Activated CD8-positive, alpha-beta T cell treated with anti-CD3 and anti-CD28 coated beads for 36 hours (primary cell): ENCODE measurements at regions of chr14 and their contacts with region 1.

Region 1: DNA sequence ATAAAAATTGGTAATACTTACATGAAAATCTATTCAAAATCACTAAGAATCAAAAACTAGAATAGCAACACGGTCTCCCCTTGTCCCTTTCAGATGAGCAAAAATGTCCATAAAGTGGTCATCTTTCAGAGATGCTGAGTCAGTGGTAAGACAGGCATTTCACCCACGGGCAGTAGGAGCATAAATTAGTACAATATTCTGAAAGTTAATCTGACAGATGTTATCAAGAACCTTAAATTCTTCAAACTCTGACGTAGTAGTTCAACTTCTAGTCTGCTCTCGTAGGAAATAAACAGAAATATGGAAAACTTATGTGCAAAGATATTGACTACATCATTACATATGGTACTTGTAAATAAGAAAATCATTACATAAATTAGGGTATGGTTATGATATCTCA is 33.1 kb upstream of the GNPNAT1 start:
- DNase-seq: no peak
- ATAC-seq: no peak
- H3K4me3 Mint-ChIP-seq: no peak overlapping the region
- H3K27ac Mint-ChIP-seq: no peak overlapping the region
- H3K4me1 Mint-ChIP-seq: peaks cover 2% of the 10 kb centered on the region
- H3K27me3 Mint-ChIP-seq: peaks cover 3% of the 10 kb centered on the region
- CTCF ChIP-seq: no peak

Region 2: GRCh38 chr14:52961060-52961639 is 136.6 kb after region 1 on chr14:
- CTCF ChIA-PET with region 1: interaction called, 49 read pairs
- POLR2A ChIA-PET with region 1: interaction called, 3 read pairs
- intact Hi-C with region 1: loop called (anchors 1 kb)
- DNase-seq: peak; percentile 64
- ATAC-seq: peak; percentile 83
- H3K4me3 Mint-ChIP-seq: no peak overlapping the region
- H3K27ac Mint-ChIP-seq: no peak overlapping the region
- H3K4me1 Mint-ChIP-seq: peaks cover 3% of the 10 kb centered on the region
- H3K27me3 Mint-ChIP-seq: no peaks in the 10 kb centered on the region
- CTCF ChIP-seq: peak; percentile 60

Region 3: GRCh38 chr14:53055003-53055402 is 230.5 kb after region 1 on chr14:
- CTCF ChIA-PET with region 1: interaction called, 14 read pairs
- POLR2A ChIA-PET with region 1: no interaction called
- intact Hi-C with region 1: loop called (anchors 10 kb)
- DNase-seq: no peak
- ATAC-seq: peak; percentile 66
- H3K4me3 Mint-ChIP-seq: no peak overlapping the region
- H3K27ac Mint-ChIP-seq: no peak overlapping the region
- H3K4me1 Mint-ChIP-seq: peaks cover 1% of the 10 kb centered on the region
- H3K27me3 Mint-ChIP-seq: no peaks in the 10 kb centered on the region
- CTCF ChIP-seq: peak; percentile 87

Region 4: DNA sequence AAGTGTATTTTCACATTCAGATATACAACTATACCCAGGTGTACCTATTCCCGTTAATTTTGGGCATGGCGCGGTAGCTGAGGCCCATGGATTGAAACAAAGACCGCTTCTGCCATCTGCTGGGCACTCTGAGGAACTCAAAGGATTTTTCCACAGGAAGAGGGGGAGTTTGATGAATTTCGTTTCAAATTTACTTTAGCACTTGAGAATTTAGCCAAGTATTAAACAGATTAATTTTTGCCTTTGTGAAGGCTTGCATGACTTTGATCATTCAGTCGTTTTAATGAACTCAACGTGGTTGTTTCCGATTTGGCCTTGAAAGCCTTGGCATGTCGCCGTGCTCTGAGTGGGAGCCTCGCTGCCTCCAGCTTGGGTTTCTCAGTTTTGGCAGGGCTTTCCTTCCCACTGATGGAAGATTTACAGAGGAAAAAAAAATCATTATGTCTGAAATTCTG is 481.8 kb after region 1 on chr14:
- CTCF ChIA-PET with region 1: interaction called, 19 read pairs
- POLR2A ChIA-PET with region 1: no interaction called
- intact Hi-C with region 1: loop called (anchors 2 kb)
- DNase-seq: peak; percentile 45
- ATAC-seq: peak; percentile 60
- H3K4me3 Mint-ChIP-seq: peak overlapping the region; percentile 59
- H3K27ac Mint-ChIP-seq: no peak overlapping the region
- H3K4me1 Mint-ChIP-seq: peaks cover 11% of the 10 kb centered on the region
- H3K27me3 Mint-ChIP-seq: peaks cover 3% of the 10 kb centered on the region
- CTCF ChIP-seq: peak; percentile 76